Mammary epithelial cell (primary cell): ENCODE measurements at regions of chr7 and their contacts with region 1.

Region 1: GRCh38 chr7:82044497-82045080 is 274.7 kb upstream of the HGF start:
- DNase-seq: peak; percentile 29
- H3K4me3 ChIP-seq: no peak overlapping the region
- H3K27ac ChIP-seq: no peak overlapping the region
- H3K4me1 ChIP-seq: peaks cover 4% of the 10 kb centered on the region
- H3K27me3 ChIP-seq: no peaks in the 10 kb centered on the region
- CTCF ChIP-seq: peak; percentile 48 to 61

Region 2: GRCh38 chr7:82234457-82235049 is 190.0 kb after region 1 on chr7:
- CTCF ChIA-PET with region 1: no interaction called
- dilution Hi-C with region 1: no loop called
- in situ Hi-C with region 1: no loop called
- intact Hi-C with region 1: loop called (anchors 5 kb)
- DNase-seq: no peak
- H3K4me3 ChIP-seq: no peak overlapping the region
- H3K27ac ChIP-seq: no peak overlapping the region
- H3K4me1 ChIP-seq: no peaks in the 10 kb centered on the region
- H3K27me3 ChIP-seq: no peaks in the 10 kb centered on the region
- CTCF ChIP-seq: peak; percentile 60 to 64

Region 3: GRCh38 chr7:82481499-82482097 is 437.0 kb after region 1 on chr7:
- CTCF ChIA-PET with region 1: no interaction called
- dilution Hi-C with region 1: no loop called
- in situ Hi-C with region 1: no loop called
- intact Hi-C with region 1: loop called (anchors 2 kb)
- DNase-seq: peak; percentile 9
- H3K4me3 ChIP-seq: no peak overlapping the region
- H3K27ac ChIP-seq: no peak overlapping the region
- H3K4me1 ChIP-seq: no peaks in the 10 kb centered on the region
- H3K27me3 ChIP-seq: no peaks in the 10 kb centered on the region
- CTCF ChIP-seq: peak; percentile 71 to 72

Region 4: DNA sequence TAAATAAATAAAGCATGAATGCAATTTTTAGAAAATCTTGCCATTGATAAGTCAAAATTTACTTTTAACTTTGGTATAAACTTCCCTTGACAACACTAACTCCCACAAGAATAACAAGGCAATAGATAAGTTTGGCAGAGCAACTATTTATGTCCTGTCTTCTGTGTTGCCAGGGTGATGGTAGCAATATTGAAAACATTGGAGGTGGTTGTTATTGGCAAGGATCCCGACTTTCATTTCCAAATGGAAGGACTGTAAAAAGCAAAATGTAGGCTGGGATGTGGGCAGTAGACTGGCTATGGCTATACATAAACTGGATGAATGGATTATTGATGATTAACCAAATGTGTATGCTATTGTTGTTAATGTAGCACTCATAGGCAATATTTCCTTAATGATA is 533.8 kb after region 1 on chr7:
- CTCF ChIA-PET with region 1: no interaction called
- dilution Hi-C with region 1: no loop called
- in situ Hi-C with region 1: loop called (anchors 10 to 25 kb)
- intact Hi-C with region 1: loop called (anchors 2 kb)
- DNase-seq: peak; percentile 10
- H3K4me3 ChIP-seq: no peak overlapping the region
- H3K27ac ChIP-seq: no peak overlapping the region
- H3K4me1 ChIP-seq: no peaks in the 10 kb centered on the region
- H3K27me3 ChIP-seq: no peaks in the 10 kb centered on the region
- CTCF ChIP-seq: no peak

Region 5: DNA sequence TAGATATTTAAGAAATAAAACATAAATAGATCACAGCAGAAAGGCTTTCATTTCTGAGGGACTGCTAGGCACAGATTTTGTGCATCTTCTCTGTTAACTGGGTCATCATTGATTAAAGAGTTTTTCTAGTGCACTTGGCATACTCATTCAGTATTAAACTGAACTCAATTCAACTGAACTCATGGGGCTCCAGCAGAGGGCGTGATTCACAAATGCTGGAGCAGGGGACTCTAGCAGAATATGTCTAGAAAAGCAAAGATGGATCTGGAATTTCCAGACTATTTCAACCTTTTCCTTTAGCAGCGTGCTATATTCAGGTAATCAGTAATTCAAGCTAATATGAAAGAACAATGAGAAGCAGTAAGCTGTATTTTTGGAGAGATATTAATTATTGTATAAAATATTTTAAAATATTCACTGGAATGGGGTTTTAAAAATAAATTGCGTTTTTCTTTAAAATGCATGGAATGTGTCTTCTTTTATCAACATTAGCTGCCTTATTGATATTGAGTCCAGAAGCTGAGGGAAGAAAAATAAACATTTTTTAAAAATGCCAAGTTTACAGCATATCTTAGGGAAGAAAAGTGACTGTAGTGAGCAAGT is 695.8 kb after region 1 on chr7:
- CTCF ChIA-PET with region 1: no interaction called
- dilution Hi-C with region 1: no loop called
- in situ Hi-C with region 1: loop called in 1 of 2 experiments (anchors 25 kb)
- intact Hi-C with region 1: no loop called
- DNase-seq: peak; percentile 40
- H3K4me3 ChIP-seq: no peak overlapping the region
- H3K27ac ChIP-seq: no peak overlapping the region
- H3K4me1 ChIP-seq: no peaks in the 10 kb centered on the region
- H3K27me3 ChIP-seq: no peaks in the 10 kb centered on the region
- CTCF ChIP-seq: peak; percentile 77 to 82